ENCODE measurements at regions of chr14 and their contacts with region 1.

Region 1: DNA sequence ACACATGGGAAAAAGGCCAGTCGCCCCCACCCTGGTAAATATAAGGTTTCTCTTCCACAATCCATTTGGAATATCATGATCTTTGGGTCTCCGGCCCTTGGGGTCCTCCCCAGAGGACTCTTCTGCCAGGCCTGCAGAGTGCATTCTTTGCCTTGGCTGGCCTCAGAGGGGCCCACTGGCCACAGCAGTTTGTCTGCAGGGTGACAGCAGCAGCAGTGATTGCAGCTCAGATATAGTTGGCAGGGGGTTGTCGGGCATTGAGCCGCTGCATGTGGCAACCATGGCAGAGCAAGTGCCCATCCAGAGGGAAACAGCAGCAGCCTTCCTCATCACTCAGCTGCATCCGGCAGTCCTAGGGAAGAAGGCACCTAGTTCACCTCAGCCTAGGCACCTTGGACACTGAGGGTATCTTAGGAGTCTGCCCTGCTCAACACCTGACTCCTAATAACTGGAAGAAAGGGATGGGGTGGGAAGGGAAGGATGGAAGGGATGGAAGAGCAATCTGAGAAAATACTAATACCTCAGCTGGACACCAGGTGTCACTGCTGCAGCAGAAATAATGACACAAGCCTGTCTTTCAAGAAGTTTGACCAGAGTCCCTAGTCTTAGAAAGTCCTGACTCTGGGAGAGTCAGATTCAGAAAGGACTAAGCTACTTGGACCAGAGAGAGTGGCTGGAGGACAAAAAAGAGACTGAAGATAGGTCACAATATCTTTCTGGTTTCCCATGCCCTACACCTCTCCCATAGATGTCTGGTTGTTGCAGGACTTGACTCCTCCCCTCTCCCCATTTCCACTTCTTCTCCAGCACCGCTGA is 8.9 kb downstream of the AJUBA start:
- DNase-seq: peak; percentile 52
- ATAC-seq: peak; percentile 51
- H3K4me3 Mint-ChIP-seq: no peak overlapping the region
- H3K27ac Mint-ChIP-seq: no peak overlapping the region
- H3K4me1 Mint-ChIP-seq: no peaks in the 10 kb centered on the region
- H3K27me3 Mint-ChIP-seq: peaks cover 14% of the 10 kb centered on the region

Region 2: GRCh38 chr14:22955702-22956569 is 17.5 kb before region 1 on chr14:
- CTCF ChIA-PET with region 1: interaction called, 34 read pairs
- DNase-seq: no peak
- ATAC-seq: no peak
- H3K4me3 Mint-ChIP-seq: peak overlapping the region; percentile 94
- H3K27ac Mint-ChIP-seq: peak overlapping the region; percentile 88
- H3K4me1 Mint-ChIP-seq: peaks cover 34% of the 10 kb centered on the region
- H3K27me3 Mint-ChIP-seq: peaks cover 4% of the 10 kb centered on the region

Region 3: GRCh38 chr14:23154964-23155587 is 181.7 kb after region 1 on chr14:
- CTCF ChIA-PET with region 1: no interaction called
- DNase-seq: no peak
- ATAC-seq: no peak
- H3K4me3 Mint-ChIP-seq: no peak overlapping the region
- H3K27ac Mint-ChIP-seq: no peak overlapping the region
- H3K4me1 Mint-ChIP-seq: no peaks in the 10 kb centered on the region
- H3K27me3 Mint-ChIP-seq: peaks cover 22% of the 10 kb centered on the region

Region 4: DNA sequence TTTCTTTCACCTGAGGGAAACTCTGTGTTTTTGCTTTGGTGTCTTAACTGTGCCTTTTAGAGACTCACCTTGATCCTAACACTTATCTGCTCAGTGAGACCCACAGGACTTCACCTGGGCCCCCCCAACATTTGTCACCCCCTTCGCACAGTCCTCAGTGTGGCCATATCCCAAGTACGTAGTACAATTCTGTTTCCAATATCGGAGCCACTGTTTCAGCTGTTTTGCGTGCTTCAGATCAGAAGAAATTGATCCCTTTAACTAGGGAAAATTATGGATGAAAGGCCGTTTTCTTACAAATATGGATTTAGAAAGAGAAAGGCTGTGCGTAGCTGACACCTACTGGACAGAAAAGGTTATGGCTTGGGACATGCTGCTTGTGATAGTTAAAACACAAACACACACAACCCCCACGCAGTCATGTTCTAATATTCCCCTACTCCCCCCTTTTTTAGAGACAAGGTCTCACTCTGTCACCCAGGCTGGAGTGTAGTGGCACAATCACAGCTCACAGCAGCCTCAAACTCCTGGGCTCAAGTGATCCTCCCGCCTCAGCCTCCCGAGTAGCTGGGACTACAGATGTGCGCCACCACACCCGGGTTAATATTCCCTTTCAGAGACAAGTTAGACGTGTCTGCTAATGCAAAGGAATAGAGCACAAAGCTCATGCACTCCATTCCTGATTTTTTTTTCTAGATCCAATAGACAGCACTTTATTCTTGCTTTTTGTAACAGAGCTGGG is 213.7 kb after region 1 on chr14:
- CTCF ChIA-PET with region 1: no interaction called
- DNase-seq: no peak
- ATAC-seq: no peak
- H3K4me3 Mint-ChIP-seq: no peak overlapping the region
- H3K27ac Mint-ChIP-seq: no peak overlapping the region
- H3K4me1 Mint-ChIP-seq: no peaks in the 10 kb centered on the region
- H3K27me3 Mint-ChIP-seq: peaks cover 8% of the 10 kb centered on the region